Dendritic cell treated with granulocyte-macrophage colony-stimulating factor and Interleukin-4, amounts not matched to agents 40 ng/mL and 50 ng/mL, for 4 days (primary cell): ENCODE measurements at regions of chr11 and their contacts with region 1.

Region 1: GRCh38 chr11:44611687-44612434 is 46.4 kb downstream of the CD82 start:
- H3K4me3 Mint-ChIP-seq: no peak overlapping the region
- H3K27ac Mint-ChIP-seq: no peak overlapping the region
- H3K4me1 Mint-ChIP-seq: peaks cover 27% of the 10 kb centered on the region
- H3K27me3 Mint-ChIP-seq: no peaks in the 10 kb centered on the region

Region 2: GRCh38 chr11:44556735-44557409 is 55.0 kb before region 1 on chr11:
- intact Hi-C with region 1: loop called (anchors 1 kb)
- H3K4me3 Mint-ChIP-seq: no peak overlapping the region
- H3K27ac Mint-ChIP-seq: no peak overlapping the region
- H3K4me1 Mint-ChIP-seq: peaks cover 35% of the 10 kb centered on the region
- H3K27me3 Mint-ChIP-seq: peaks cover 6% of the 10 kb centered on the region

Region 3: GRCh38 chr11:44574610-44575287 is 37.1 kb before region 1 on chr11:
- intact Hi-C with region 1: loop called (anchors 5 kb)
- H3K4me3 Mint-ChIP-seq: no peak overlapping the region
- H3K27ac Mint-ChIP-seq: peak overlapping the region; percentile 6
- H3K4me1 Mint-ChIP-seq: peaks cover 84% of the 10 kb centered on the region
- H3K27me3 Mint-ChIP-seq: peaks cover 12% of the 10 kb centered on the region

Region 4: GRCh38 chr11:44645827-44646226 is 34.0 kb after region 1 on chr11:
- intact Hi-C with region 1: no loop called
- H3K4me3 Mint-ChIP-seq: no peak overlapping the region
- H3K27ac Mint-ChIP-seq: no peak overlapping the region
- H3K4me1 Mint-ChIP-seq: no peaks in the 10 kb centered on the region
- H3K27me3 Mint-ChIP-seq: no peaks in the 10 kb centered on the region